ENCODE measurements at regions of chr11 and their contacts with region 1.

Region 1: GRCh38 chr11:118607401-118608359 is at the start of gene PHLDB1:
- DNase-seq: peak; percentile 46 to 86
- H3K4me3 ChIP-seq: peak within 1 kb of the TSS; percentile 47 to 79 (median 70)
- H3K27ac ChIP-seq: peak within 1 kb of the TSS; percentile 55 to 98 (median 91)
- H3K4me1 ChIP-seq: peaks cover 63 to 86% (median 79%) of the 10 kb centered on the region in 4 donors
- H3K27me3 ChIP-seq: peaks cover 0 to 42% (median 34%) of the 10 kb centered on the region in 3 donors
- CTCF ChIP-seq: peak in 4 of 7 experiments; percentile 16 to 49 (median 27)
- EP300 ChIP-seq: no peak
- POLR2A ChIP-seq: no peak
- total RNA-seq, gene PHLDB1: 34.4 to 291 (median 50.2) TPM

Region 2: GRCh38 chr11:118240999-118241768 is 366.5 kb before region 1 on chr11:
- intact Hi-C with region 1: no loop called
- DNase-seq: peak; percentile 47 to 67
- H3K4me3 ChIP-seq: no peak overlapping the region
- H3K27ac ChIP-seq: peak overlapping the region; percentile 68 to 89 (median 74)
- H3K4me1 ChIP-seq: peaks cover 16 to 60% (median 21%) of the 10 kb centered on the region in 4 donors
- H3K27me3 ChIP-seq: no peaks in the 10 kb centered on the region
- CTCF ChIP-seq: no peak
- EP300 ChIP-seq: no peak
- POLR2A ChIP-seq: no peak

Region 3: DNA sequence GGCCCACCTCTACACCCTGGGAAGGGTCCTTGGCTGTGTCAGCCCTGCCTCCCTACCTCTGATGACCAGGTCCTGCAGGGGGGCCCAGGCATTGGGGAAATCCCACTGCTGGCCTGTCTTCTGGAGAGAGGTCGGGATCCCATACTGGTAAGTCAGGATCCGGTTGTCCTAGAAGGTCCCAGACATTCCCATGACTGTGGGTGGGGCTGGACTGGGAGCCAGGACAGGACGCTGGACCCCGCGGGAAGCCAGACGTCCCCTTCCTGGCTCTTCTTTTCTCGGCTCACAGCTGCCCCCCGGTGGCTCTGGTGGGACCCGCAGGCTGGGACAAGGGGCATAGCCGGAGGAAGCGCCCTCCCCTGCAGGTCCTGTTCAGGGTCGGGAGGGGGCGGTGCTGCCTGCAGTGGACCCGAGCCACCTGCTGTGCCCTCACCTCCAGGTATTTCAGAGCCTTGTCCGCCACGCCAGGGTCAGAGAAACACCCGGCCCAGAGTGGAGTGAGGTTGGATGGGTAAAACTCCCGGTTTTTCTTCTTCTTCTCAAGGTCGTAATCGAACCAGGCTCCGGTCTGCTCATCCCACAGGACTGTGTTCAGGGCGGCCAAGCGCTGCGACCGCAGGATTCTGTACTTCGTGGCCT is 51.8 kb after region 1 on chr11:
- intact Hi-C with region 1: loop called (anchors 5 kb)
- DNase-seq: peak; percentile 92 to 95
- H3K4me3 ChIP-seq: no peak overlapping the region
- H3K27ac ChIP-seq: peak overlapping the region in 4 of 5 donors; percentile 35 to 61 (median 55)
- H3K4me1 ChIP-seq: peaks cover 8 to 16% (median 14%) of the 10 kb centered on the region in 4 donors
- H3K27me3 ChIP-seq: peaks cover 0 to 6% (median 0%) of the 10 kb centered on the region in 3 donors
- CTCF ChIP-seq: peak in 5 of 7 experiments; percentile 94 to 98 (median 95)
- EP300 ChIP-seq: no peak
- POLR2A ChIP-seq: no peak